Natural killer cell (primary cell): ENCODE measurements at regions of chr15 and their contacts with region 1.

Region 1: GRCh38 chr15:68829068-68829467 is 8.4 kb upstream of the ANP32A start:
- DNase-seq: peak in 1 of 2 donors; percentile 68
- ATAC-seq: peak; percentile 72 to 92 (median 84)
- H3K4me3 ChIP-seq: no peak overlapping the region
- H3K4me3 Mint-ChIP-seq: no peak overlapping the region
- H3K27ac ChIP-seq: no peak overlapping the region
- H3K27ac Mint-ChIP-seq: no peak overlapping the region
- H3K4me1 ChIP-seq: no peaks in the 10 kb centered on the region
- H3K4me1 Mint-ChIP-seq: peaks cover 0 to 4% of the 10 kb centered on the region in 2 donors
- H3K27me3 ChIP-seq: peaks cover 3% of the 10 kb centered on the region
- H3K27me3 Mint-ChIP-seq: peaks cover 9% of the 10 kb centered on the region in 2 donors
- CTCF ChIP-seq: peak; percentile 67

Region 2: DNA sequence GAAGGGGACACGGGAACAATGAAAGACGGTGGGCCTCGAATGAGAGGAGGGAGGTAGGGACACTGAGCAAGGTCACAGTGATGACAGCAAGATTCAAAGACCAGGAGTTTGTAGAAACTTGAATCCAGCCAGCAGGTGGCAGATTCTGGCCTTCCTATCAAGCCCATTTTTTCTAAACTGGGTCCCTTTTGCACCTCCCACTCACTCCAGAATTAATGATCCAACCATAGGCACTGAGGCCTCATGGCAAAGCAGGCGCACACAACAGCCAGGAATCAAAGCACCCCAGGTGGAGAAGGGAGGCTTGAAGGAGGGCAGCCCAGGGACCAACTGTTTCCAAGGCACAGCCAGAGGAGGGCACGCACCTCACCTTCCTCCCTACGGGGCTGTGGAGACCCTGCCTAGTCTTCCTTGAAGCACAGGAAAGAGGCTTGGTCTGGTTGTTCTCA is 98.6 kb before region 1 on chr15:
- intact Hi-C with region 1: loop called (anchors 1 kb)
- DNase-seq: peak in 1 of 2 donors; percentile 62
- ATAC-seq: peak in 1 of 3 donors; percentile 53
- H3K4me3 ChIP-seq: no peak overlapping the region
- H3K4me3 Mint-ChIP-seq: no peak overlapping the region
- H3K27ac ChIP-seq: no peak overlapping the region
- H3K27ac Mint-ChIP-seq: no peak overlapping the region
- H3K4me1 ChIP-seq: no peaks in the 10 kb centered on the region
- H3K4me1 Mint-ChIP-seq: peaks cover 0 to 6% of the 10 kb centered on the region in 2 donors
- H3K27me3 ChIP-seq: no peaks in the 10 kb centered on the region
- H3K27me3 Mint-ChIP-seq: peaks cover 3 to 5% of the 10 kb centered on the region in 2 donors
- CTCF ChIP-seq: peak; percentile 67